Activated B cell treated with CpG ODN at 0.5 μM for 24 hours (primary cell): ENCODE measurements at regions of chr15 and their contacts with region 1.

Region 1: DNA sequence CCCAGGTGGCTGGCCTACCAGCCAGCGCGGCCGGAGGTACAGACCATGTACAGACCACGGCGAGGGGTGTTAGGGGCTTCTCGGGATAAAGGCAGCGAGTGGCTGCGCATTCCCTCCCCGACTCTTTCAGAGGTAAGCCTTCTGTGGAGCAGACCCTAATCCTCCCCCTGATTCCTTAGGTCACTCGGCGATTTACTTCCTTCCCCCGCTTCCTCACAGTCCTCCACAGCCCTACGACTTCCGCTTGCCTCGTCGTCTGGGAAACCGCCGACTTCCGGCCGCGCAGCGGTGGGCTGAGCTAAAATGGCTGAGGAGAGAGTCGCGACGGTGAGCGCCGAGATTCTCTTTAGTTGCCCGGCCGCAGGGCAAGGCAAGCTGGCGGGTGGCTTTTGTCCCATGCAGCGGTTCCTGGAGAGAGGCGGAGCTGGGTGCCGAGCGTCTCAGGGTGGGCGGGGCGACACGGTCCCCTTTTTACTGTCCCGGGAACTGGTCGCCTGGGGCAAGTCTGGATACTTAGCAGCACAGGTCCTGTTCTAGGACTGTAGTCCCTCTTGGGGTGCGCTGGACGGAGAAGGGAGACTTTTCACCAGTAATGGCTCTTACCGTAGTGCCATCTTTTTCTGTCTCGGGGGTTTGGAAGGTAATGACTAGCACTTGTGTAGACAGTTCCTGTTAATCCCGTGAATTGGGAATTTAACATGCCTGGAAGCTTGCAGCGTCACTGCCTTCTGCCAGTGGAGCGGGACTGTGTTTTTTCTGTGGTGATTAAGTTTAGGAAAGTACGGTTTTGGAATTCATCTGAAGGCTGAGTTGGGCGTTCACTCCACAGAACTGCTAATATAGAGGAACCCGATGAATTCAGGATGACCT is at the starts of genes BBS4 and HIGD2B:
- DNase-seq: peak; percentile 83
- ATAC-seq: peak; percentile 93
- H3K4me3 Mint-ChIP-seq: peak within 1 kb of the TSS; percentile 97
- H3K27ac Mint-ChIP-seq: peak within 1 kb of the TSS; percentile 93
- H3K4me1 Mint-ChIP-seq: peaks cover 20% of the 10 kb centered on the region
- H3K27me3 Mint-ChIP-seq: no peaks in the 10 kb centered on the region
- CTCF ChIP-seq: no peak
- total RNA-seq, gene BBS4: 19.4 and 21.4 TPM in 2 replicates
- total RNA-seq, gene HIGD2B: 0.20 and 0.55 TPM in 2 replicates

Region 2: DNA sequence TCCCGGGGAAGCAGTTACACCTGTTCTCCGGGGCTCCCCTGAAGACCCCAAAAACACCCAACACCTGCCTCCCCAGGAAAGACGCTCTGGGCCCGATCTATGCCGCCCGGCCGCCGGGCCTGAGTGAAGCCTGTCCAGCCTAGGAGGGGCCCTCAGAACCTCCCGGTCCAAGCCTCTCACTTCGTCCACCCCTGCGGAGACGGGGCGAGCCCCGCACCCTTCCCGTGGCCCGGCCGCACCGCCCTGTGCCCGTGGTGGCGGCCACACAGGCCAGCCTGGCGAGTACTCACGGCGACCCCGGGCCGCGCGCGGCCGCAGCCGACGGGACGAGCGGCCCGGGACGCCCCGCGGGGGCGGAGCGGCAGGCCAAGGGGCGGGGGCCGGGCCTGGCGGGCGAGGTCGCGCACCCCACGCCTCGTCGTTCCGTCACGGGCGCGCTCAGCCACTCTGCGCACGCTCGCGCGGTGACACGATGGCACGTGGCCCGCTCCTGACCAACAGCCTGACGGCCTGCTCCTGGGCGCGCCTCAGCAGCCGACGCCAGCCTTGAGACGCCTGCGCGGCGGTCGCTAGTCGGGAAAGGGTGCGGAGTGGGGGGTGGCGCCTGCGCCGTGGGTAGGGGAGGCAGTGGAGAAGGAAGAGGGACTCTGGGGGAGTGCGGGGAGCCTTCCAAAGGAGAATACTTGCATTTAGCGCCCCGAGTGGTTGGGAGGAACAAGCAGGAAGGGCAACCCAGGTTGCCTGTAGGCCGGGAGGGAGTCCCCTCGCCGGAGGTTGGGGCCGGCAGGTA is 413.8 kb before region 1 on chr15 and contains the start of gene PARP6:
- CTCF ChIA-PET with region 1: no interaction called
- POLR2A ChIA-PET with region 1: no interaction called
- intact Hi-C with region 1: loop called (anchors 5 kb)
- DNase-seq: peak; percentile 95
- ATAC-seq: peak; percentile 96
- H3K4me3 Mint-ChIP-seq: peak within 1 kb of the TSS; percentile 87
- H3K27ac Mint-ChIP-seq: peak within 1 kb of the TSS; percentile 86
- H3K4me1 Mint-ChIP-seq: peaks cover 36% of the 10 kb centered on the region
- H3K27me3 Mint-ChIP-seq: no peaks in the 10 kb centered on the region
- CTCF ChIP-seq: no peak
- total RNA-seq, gene PARP6: 70.7 and 81.4 TPM in 2 replicates

Region 3: DNA sequence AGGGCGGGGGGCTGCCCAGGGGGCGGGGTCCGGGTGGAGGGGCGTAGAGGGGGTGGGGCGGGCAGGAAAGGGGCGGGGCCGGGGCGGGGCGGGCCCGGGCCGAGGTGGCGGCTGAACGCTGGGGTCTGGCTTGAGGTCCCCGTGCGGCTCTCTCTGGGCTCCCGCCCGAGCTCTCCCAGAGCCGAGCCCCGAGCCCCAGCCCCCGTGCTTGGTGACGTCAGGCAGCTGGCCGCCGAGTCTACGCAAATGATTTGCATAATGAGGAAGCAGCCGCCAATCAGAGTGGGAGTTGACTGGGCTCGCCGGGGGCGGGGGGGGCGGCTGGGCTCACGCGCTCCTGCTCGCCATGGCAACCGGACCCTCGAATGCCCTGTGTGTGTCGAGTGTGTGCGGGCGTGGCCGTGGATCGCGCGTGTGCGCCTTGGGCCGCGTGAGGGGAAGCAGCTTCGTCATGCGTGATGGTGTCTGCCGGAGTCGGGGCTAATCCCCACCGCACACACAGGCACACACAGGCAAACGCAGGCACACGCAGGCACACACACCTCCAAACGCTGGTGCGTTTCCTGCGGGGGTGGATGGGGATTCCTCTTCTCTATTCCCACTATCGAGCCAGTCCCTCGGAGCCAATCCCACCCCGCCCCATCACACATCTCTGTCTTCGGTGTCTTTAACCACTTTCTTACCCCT is 366.0 kb before region 1 on chr15 and contains the start of gene CELF6:
- CTCF ChIA-PET with region 1: no interaction called
- POLR2A ChIA-PET with region 1: no interaction called
- intact Hi-C with region 1: loop called (anchors 5 kb)
- DNase-seq: peak; percentile 77
- ATAC-seq: peak; percentile 81
- H3K4me3 Mint-ChIP-seq: peak within 1 kb of the TSS; percentile 86
- H3K27ac Mint-ChIP-seq: peak within 1 kb of the TSS; percentile 47
- H3K4me1 Mint-ChIP-seq: peaks cover 18% of the 10 kb centered on the region
- H3K27me3 Mint-ChIP-seq: no peaks in the 10 kb centered on the region
- CTCF ChIP-seq: no peak
- total RNA-seq, gene CELF6: 2.0 and 2.2 TPM in 2 replicates

Region 4: DNA sequence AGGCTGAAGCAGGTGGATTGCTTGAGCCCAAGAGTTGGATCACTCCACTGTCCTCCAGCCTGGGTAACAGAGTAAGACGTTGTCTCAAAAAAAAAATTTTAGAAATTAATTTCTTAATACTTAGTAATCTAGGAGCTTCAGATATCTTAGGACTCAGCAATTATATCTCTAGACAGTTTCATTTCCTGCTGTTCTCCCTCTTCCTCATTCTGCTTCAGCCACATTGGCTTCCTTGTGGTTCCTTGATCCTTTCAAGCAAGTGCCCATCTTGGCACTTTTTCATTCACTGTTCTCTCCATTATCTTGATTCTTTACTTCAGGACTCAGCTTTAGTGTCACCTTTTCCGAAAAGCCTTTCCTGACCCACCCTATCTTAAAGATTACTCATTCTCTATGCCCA is 265.6 kb before region 1 on chr15:
- CTCF ChIA-PET with region 1: no interaction called
- POLR2A ChIA-PET with region 1: no interaction called
- intact Hi-C with region 1: no loop called
- DNase-seq: no peak
- ATAC-seq: no peak
- H3K4me3 Mint-ChIP-seq: no peak overlapping the region
- H3K27ac Mint-ChIP-seq: no peak overlapping the region
- H3K4me1 Mint-ChIP-seq: peaks cover 5% of the 10 kb centered on the region
- H3K27me3 Mint-ChIP-seq: no peaks in the 10 kb centered on the region
- CTCF ChIP-seq: no peak

Region 5: DNA sequence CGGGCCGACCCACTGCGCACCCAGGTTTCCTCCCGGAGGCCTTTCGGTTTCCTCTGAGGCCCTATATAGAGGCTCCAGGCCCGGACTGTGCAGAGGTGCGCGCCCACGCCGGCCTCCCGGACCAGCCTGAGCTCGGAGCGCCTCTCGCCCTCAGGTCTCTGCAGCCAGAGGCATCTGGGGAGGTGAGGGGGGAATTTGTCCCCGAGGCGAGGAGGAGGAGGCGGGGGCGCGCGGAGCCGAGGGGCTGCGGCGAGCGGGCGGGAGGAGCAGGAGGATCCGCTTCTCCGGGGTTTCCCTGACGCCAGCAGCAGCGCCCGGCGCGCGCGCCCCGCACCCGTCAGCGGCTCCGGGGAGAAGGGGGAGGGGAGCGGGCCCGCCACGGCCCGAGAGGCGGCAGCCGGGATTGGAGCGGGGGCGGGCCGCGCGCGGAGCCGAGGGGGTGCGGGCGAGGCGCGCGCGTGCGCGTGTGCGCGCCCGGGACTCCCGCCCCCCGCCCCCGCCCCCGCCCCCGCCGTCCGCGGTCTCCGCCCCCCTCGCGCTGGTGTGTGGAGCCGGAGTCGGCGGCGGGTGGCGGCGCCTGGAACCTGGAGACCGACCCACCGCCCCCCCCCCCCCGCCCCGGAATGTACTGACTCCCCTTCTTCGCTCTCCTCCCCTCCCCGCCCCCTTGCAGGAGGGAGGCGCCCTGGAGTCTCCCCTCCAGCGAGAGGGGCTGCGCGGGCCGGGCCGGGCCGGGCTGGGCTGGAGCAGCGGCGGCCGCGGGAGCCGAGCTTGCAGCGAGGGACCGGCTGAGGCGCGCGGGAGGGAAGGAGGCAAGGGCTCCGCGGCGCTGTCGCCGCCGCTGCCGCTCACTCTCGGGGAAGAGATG is 365.9 kb after region 1 on chr15 and contains the start of gene NEO1:
- CTCF ChIA-PET with region 1: no interaction called
- POLR2A ChIA-PET with region 1: no interaction called
- intact Hi-C with region 1: loop called (anchors 5 kb)
- DNase-seq: peak; percentile 61
- ATAC-seq: peak; percentile 78
- H3K4me3 Mint-ChIP-seq: peak within 1 kb of the TSS; percentile 81
- H3K27ac Mint-ChIP-seq: peak within 1 kb of the TSS; percentile 15
- H3K4me1 Mint-ChIP-seq: peaks cover 9% of the 10 kb centered on the region
- H3K27me3 Mint-ChIP-seq: peaks cover 25% of the 10 kb centered on the region
- CTCF ChIP-seq: no peak
- total RNA-seq, gene NEO1: 1.0 and 2.3 TPM in 2 replicates